GM23248 (cell line): ENCODE measurements at regions of chr1 and their contacts with region 1.

Region 1: DNA sequence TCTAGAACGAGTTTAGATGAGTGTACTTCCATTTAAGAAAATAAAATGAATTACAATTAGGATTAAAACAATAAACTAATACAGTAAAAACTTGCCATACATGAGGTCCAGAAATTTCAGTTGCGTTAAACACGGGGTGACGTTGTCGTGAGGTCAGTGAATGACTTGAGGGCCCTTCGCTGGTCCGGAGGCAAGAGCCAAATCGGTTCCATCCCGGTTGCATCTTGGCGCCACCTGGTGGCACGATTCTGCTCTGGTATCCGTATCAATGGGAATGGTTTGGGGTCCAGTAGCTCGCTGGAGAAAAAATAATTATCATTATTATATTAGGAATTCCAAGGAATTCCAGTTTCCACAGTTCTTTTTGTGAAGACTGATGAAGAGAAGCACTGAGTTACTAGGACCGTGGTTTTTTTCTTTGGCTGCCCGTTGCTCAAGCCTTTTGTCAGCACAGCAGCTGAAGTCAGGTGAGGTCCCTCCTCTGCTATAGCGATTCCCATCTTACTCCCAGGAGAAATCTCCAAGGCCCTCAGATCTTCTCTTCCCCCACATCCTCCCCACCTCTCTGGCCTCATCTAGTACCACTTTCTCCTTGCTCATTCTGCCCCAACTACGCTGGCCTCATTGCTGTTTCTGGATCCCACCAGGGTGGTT is 161.4 kb downstream of the SLC35F3 start:
- DNase-seq: peak; percentile 82
- H3K4me3 ChIP-seq: no peak overlapping the region
- H3K27ac ChIP-seq: no peak overlapping the region
- H3K4me1 ChIP-seq: no peaks in the 10 kb centered on the region
- H3K27me3 ChIP-seq: no peaks in the 10 kb centered on the region; the same call in 1 of the 2 replicates

Region 2: DNA sequence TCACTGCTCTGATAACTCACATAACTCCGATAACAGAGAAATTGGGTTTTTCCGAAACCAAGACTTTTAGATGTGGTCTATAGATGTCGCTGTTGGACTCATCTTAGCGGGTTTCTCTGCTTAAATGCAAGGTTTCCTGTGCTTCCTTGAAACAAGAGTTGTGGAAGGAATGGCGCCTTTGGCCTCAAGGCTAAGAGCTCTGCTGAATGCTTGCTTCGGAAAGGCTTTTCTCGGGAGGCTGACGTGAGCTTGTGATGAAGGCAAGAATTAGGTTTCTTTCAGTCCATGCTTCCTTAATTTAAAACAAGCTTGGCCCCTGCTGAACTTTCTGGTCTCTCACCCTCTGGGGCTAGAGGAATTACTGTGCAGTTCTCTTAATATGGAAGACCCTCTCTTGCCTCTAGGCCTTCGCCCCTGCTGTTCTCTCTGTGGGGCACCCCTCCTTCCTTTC is 624.9 kb before region 1 on chr1:
- in situ Hi-C with region 1: loop called (anchors 25 kb)
- DNase-seq: peak; percentile 80
- H3K4me3 ChIP-seq: no peak overlapping the region
- H3K27ac ChIP-seq: no peak overlapping the region
- H3K4me1 ChIP-seq: no peaks in the 10 kb centered on the region
- H3K27me3 ChIP-seq: peaks cover 13% of the 10 kb centered on the region